ENCODE measurements at regions of chr11 and their contacts with region 1.

Region 1: DNA sequence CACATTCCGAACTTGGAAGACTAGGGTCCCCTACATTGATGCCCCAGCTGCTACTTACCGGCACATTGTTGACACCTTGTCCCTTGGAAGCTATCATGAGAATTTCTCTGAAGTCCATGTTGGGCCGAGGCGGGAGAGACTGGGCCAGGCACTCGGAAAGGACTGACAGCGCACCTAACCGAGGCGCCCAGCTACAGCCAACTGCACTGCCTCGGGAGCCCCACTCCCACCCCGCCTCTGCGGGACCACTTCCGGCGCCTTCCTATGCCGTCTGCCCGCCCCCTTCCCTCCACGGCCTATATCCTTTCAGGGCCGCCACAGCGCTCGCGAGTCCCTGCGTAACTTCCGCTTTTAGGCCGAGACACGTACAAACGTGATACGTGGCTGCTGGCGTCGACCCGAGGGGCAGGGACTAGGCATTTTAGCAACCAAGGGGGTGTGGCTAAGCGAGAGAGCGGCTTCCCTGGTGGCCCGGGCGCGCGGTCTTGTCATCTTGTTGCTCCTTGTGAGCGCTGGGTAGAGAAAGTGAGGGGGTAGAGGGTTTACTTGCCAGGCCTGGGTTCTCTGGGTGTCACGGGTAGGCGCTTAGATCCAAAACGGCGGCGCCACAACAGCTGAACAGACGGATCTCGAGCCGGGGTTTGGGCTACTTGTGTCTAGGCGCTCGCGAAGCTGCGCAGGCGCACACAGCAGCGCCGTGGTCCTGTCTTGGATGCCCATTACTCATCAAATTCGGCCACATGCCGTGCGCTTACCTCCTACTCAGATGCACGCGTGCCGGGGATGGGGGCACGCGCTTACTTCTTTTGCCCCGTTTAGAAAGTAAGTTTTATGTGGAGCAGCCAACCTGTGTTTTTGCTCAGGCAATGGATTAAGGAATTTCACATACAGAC is at the start of gene SPTY2D1:
- DNase-seq: peak; percentile 100
- ATAC-seq: peak; percentile 99
- total RNA-seq, gene SPTY2D1: 9.0 to 10.9 TPM

Region 2: DNA sequence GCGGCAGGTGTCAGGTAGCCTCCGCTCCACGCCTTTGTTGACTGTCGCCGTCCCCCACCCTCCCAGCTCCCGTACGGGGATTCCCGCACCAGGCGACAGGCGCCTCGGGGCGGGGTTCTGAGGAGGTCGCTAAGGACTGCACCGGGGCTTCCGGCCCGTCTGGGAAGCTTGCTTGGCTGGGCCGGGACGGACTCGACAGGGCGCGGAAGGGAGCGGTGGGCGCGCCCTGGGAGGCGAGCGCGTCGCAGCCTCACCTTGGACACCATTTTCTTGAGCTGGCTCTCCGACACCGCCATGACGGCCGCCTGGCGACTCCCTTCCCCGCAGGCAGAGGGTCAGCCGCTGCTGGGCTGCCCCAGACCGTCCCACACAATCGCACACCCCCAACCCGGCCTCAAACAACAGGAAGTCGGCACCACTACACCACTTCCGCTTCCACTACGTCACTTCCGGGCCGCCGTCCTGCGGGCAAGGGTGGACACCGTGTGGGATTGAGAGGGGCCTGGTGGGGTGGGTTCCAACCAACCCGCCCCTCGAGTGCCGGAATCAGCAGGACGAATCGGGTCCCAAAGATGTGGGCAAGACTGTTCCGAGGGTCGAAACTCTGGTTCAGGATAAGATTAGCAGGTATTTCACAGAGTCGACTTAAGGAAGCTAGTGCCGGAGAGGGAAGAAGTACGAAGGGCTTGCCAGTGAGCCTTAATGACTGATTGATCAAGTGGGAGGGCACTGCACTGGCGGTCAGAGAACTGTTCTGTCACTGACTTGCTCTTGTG is 107.7 kb before region 1 on chr11 and contains the start of gene TSG101:
- intact Hi-C with region 1: loop called in 1 of 2 experiments (anchors 5 kb)
- DNase-seq: peak; percentile 97
- ATAC-seq: peak; percentile 99 to 100
- total RNA-seq, gene TSG101: 49.8 to 51.1 TPM

Region 3: GRCh38 chr11:18588297-18589252 is 45.8 kb before region 1 on chr11 and contains the start of gene UEVLD:
- intact Hi-C with region 1: loop called in 1 of 2 experiments (anchors 2 kb)
- DNase-seq: peak; percentile 93
- ATAC-seq: peak; percentile 97 to 98
- total RNA-seq, gene UEVLD: 16.1 to 17.6 TPM

Region 4: GRCh38 chr11:18698341-18699268 is 64.2 kb after region 1 on chr11 and contains the start of gene TMEM86A:
- intact Hi-C with region 1: loop called in 1 of 2 experiments (anchors 5 kb)
- DNase-seq: peak; percentile 96
- ATAC-seq: peak; percentile 96 to 97
- total RNA-seq, gene TMEM86A: 3.9 to 4.8 TPM

Measured in left cardiac atrium (tissue), 4 donors.